ENCODE measurements at regions of chr15 and their contacts with region 1.

Region 1: GRCh38 chr15:39756806-39757522 is 25.7 kb downstream of the FSIP1 start:
- DNase-seq: peak in 1 of 2 donors; percentile 16
- ATAC-seq: peak in 1 of 8 donors; percentile 35
- H3K4me3 ChIP-seq: no peak overlapping the region
- H3K27ac ChIP-seq: no peak overlapping the region
- H3K4me1 ChIP-seq: peaks cover 0 to 7% (median 0%) of the 10 kb centered on the region in 9 donors
- H3K27me3 ChIP-seq: no peaks in the 10 kb centered on the region
- CTCF ChIP-seq: peak; percentile 52 to 94 (median 87)

Region 2: DNA sequence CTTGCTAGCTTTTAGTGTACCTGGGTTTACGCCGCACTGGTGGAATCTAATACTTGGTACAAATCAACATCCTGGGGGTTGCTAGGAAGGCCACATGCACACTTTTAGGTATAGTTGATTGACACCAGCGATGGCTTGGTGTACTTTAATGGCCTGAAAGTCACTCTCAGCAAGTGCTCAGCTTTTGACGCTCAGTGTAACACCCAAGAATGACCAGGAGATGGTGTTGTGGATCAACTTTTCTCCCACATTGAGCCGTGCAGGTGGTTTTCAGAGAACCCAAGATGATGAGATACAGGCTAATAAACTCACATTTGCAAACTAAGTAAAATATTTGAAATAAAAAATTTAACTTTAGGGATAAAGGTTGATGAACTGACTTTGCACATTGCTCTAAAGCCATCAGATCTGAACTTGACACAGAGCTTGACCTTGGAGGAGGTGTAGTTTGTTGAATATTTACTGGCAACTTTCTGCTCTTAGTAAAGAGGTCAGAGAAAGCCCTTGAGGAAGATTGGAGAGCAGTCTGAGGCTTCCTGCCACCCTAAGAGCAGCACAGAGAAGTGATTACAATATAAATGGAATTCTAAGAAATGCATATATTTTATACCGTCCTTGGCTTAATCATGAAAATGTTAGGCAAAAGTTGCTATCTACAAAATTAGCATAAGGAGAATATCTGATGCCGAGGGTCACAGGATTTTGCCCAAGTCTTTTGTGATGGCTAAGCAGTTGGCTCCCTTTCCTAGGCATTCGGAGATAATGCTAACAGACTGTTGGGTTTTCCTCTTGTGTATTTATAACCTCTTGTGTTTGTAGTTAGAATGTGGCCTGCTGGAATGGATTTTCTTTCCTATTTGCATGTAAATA is 1048.9 kb before region 1 on chr15:
- intact Hi-C with region 1: loop called in 8 of 10 experiments (anchors 5 to 10 kb)
- DNase-seq: peak in 1 of 2 donors; percentile 13
- ATAC-seq: peak; percentile 55 to 89 (median 78)
- H3K4me3 ChIP-seq: no peak overlapping the region
- H3K27ac ChIP-seq: no peak overlapping the region
- H3K4me1 ChIP-seq: peaks cover 0 to 5% (median 0%) of the 10 kb centered on the region in 9 donors
- H3K27me3 ChIP-seq: peaks cover 0 to 25% (median 6%) of the 10 kb centered on the region in 7 donors
- CTCF ChIP-seq: peak; percentile 29 to 77 (median 70)

Region 3: DNA sequence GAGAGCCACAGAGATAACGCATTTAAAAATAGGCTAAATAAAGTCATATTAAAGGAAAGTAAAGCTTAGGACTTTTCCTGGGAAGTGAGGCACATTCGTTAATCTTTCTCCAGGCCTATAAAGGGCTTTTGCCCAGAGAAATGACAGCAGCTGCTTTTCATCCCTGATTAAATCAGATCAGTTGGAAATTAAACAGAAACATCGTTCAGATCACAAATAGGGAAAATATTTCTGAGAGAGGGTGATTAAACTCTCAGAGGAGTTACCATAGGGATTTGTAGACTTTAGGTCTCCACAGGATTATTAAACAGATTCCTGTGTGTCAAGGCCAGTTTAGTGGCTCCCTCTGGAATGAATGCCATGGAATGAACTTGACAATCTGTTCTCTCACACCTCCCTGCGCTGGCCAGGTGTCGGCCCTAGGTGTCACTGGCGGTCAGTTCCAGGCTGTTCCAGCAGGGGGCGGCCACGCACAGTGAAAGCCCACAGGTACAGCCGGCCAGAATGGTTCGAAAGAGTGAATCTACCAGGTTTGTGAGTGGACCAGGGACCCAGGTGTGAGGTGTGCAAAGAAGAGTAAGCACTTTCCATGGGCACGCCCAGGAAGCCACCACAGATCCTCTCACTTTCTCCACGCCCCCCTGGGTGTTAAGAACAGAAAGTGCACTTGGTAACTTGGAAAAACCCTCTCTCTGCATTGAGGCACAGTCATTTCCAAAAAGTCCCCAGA is 939.4 kb before region 1 on chr15:
- intact Hi-C with region 1: loop called in 8 of 10 experiments (anchors 5 to 10 kb)
- DNase-seq: peak; percentile 74 to 81
- ATAC-seq: peak; percentile 85 to 96 (median 94)
- H3K4me3 ChIP-seq: peak overlapping the region in 1 of 10 donors; percentile 17
- H3K27ac ChIP-seq: no peak overlapping the region
- H3K4me1 ChIP-seq: peaks cover 0 to 9% (median 3%) of the 10 kb centered on the region in 9 donors
- H3K27me3 ChIP-seq: no peaks in the 10 kb centered on the region
- CTCF ChIP-seq: peak; percentile 96 to 100 (median 99)

Region 4: GRCh38 chr15:39586387-39587171 is 170.4 kb before region 1 on chr15:
- intact Hi-C with region 1: loop called in 7 of 10 experiments (anchors 2 to 10 kb)
- DNase-seq: no peak
- ATAC-seq: peak in 1 of 8 donors; percentile 39
- H3K4me3 ChIP-seq: no peak overlapping the region
- H3K27ac ChIP-seq: peak overlapping the region in 4 of 10 donors; percentile 0 to 45 (median 23)
- H3K4me1 ChIP-seq: peaks cover 5 to 69% (median 33%) of the 10 kb centered on the region in 9 donors
- H3K27me3 ChIP-seq: no peaks in the 10 kb centered on the region
- CTCF ChIP-seq: no peak

Region 5: DNA sequence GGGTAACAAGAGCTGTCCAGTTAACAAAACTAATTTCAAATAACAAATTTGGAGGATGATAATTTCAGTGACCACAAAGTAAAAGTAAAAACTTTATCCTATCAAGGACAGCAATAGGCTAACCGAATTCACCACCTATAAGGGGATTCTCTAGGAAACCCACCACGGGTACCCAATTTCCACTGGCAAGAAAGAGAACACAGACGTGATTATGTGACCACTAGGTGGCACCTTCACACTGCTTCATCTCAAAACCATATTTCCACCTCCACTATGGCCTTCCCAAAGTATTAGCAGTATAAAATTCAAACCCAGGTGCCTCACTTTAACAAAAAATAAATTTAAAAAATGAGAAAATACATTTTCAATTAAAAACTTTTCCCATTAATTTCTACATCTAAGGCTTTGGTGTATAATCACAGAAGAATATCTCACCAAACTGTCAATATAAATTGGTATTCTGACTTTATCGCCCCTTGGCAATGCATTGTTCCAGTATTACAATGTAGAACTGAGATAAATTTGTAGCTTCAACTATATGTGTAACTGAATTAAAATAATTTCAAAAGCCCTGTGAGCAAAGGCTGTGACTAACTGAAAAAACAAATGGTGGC is 70.9 kb before region 1 on chr15:
- intact Hi-C with region 1: loop called (anchors 1 to 10 kb)
- DNase-seq: peak in 1 of 2 donors; percentile 32
- ATAC-seq: peak in 6 of 8 donors; percentile 59 to 78 (median 66)
- H3K4me3 ChIP-seq: no peak overlapping the region
- H3K27ac ChIP-seq: no peak overlapping the region
- H3K4me1 ChIP-seq: no peaks in the 10 kb centered on the region
- H3K27me3 ChIP-seq: no peaks in the 10 kb centered on the region
- CTCF ChIP-seq: peak; percentile 55 to 88 (median 84)

Measured in heart right ventricle (tissue), 16 donors.